ENCODE measurements at regions of chr9 and their contacts with region 1.

Region 1: DNA sequence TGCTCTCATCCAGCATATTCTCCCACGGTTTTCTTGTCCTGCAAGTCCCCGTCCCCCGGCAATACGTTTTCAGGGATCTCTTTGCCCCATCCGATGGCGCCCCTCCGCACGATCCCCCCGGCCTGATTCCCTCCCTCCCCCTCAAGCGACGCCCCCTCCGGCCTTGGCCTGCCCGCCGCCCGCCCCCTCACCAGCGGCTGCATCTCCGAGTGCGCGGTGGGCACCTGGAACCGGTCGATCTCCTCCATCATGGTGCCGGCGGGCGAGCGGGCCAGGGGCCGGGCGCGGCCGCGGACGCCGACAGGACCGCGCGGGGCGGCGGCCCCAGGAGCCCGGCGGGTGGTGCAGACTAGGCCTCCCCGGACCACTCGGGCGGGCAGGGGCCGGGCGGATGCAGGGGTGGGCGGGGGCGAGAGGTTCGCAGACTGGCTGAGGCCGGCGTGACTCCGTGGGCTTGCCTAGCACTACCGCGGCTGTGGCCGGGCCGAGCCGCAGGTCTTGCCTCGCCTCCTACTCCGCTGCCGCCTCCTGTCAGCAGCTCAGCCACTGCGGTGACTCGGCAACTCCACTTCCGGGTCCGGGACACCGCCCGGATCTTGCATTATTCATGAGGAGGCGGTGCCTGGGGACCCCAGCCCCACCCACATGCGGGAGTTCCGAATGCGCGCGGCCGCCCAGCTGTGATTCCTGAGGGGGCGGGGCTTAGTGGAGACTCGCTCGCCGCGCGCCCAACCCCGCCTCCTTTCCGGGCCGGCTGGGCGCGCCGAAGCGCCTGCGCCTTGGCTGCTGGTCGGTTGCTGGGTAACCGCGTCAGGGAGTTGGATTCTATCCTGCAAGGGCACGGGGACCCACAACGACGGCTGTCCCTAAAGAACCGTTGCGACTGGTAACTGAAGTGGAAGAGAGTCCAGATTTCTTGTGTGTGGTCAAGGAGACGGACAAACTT is at the starts of genes DNAI1 and FAM219A:
- DNase-seq: peak; percentile 96 to 99 (median 98)
- H3K4me3 ChIP-seq: peak within 1 kb of the TSS; percentile 47 to 79 (median 61)
- H3K4me3 Mint-ChIP-seq: peak within 1 kb of the TSS; percentile 92 to 97
- H3K27ac ChIP-seq: peak within 1 kb of the TSS in 1 of 2 donors; percentile 38
- H3K27ac Mint-ChIP-seq: peak within 1 kb of the TSS in 4 of 7 donors; percentile 71 to 86 (median 78)
- H3K4me1 ChIP-seq: peaks cover 28 to 29% of the 10 kb centered on the region in 2 donors
- H3K4me1 Mint-ChIP-seq: peaks cover 34% of the 10 kb centered on the region
- H3K27me3 ChIP-seq: peaks cover 2 to 15% of the 10 kb centered on the region in 2 donors
- H3K27me3 Mint-ChIP-seq: peaks cover 23 to 32% (median 27%) of the 10 kb centered on the region in 3 donors
- CTCF ChIP-seq: no peak
- polyA plus RNA-seq, gene DNAI1: not detected
- polyA plus RNA-seq, gene FAM219A: 0.61 to 15.3 (median 1.2) TPM

Region 2: GRCh38 chr9:34376596-34377403 is 81.5 kb before region 1 on chr9 and contains the start of gene MYORG:
- intact Hi-C with region 1: loop called (anchors 5 kb)
- DNase-seq: peak; percentile 59 to 71 (median 67)
- H3K4me3 ChIP-seq: peak within 1 kb of the TSS; percentile 56 to 90 (median 74)
- H3K4me3 Mint-ChIP-seq: peak within 1 kb of the TSS; percentile 89 to 94
- H3K27ac ChIP-seq: no peak within 1 kb of the TSS
- H3K27ac Mint-ChIP-seq: peak within 1 kb of the TSS in 6 of 7 donors; percentile 54 to 80 (median 71)
- H3K4me1 ChIP-seq: peaks cover 35 to 45% of the 10 kb centered on the region in 2 donors
- H3K4me1 Mint-ChIP-seq: peaks cover 39% of the 10 kb centered on the region
- H3K27me3 ChIP-seq: peaks cover 0 to 22% of the 10 kb centered on the region in 2 donors
- H3K27me3 Mint-ChIP-seq: peaks cover 27 to 46% (median 30%) of the 10 kb centered on the region in 3 donors
- CTCF ChIP-seq: no peak
- polyA plus RNA-seq, gene MYORG: 0.01 to 0.05 TPM in 2 of 3 donors, not detected in the other

Region 3: DNA sequence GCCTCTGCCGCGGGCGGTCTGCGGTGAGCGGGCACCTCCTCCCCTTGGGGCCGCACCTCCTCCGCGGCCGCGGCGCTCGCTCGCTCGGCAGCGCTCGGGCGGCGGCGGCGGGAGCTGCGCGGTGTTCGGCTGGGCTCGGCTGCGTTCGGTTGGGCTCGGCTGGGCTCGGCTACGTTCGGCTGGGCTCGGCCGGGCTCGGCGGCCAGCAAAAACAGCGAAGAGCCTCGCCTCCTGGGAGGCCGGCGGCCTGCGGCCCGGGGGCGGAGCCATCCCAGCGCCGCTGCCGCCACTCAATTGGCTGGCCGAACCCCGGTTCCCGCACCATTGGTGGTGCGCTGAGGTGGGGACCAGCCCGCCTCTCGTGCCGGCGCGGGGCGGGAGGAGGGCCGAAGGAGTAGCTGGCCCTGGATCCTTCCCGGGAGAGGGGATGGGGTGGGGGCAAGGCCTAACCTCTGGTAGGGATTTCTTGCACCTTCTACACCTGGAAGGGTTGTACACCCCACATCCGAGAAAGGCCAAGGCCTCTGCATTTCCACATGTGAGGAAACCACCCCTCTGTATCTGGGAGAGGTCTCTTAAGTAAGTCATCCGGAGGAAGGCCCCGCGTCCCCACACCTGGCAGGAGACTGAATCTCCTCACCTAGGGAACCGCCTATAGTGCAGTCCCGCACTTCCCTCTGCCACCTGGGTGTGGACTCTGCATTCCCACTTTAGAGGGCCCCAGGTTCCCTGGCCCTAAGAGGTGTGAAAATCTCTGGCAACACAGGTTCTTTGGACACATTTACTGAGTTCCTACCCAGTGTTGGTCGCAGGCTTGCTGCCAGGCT is 64.9 kb after region 1 on chr9 and contains the start of gene ENHO:
- intact Hi-C with region 1: loop called in 1 of 2 experiments (anchors 5 kb)
- DNase-seq: peak; percentile 82 to 87 (median 82)
- H3K4me3 ChIP-seq: peak within 1 kb of the TSS; percentile 30 to 74 (median 36)
- H3K4me3 Mint-ChIP-seq: peak within 1 kb of the TSS; percentile 72 to 89
- H3K27ac ChIP-seq: no peak within 1 kb of the TSS
- H3K27ac Mint-ChIP-seq: peak within 1 kb of the TSS in 2 of 7 donors; percentile 13 to 66
- H3K4me1 ChIP-seq: peaks cover 37 to 43% of the 10 kb centered on the region in 2 donors
- H3K4me1 Mint-ChIP-seq: peaks cover 29% of the 10 kb centered on the region
- H3K27me3 ChIP-seq: peaks cover 5 to 34% of the 10 kb centered on the region in 2 donors
- H3K27me3 Mint-ChIP-seq: peaks cover 26 to 36% (median 29%) of the 10 kb centered on the region in 3 donors
- CTCF ChIP-seq: no peak
- polyA plus RNA-seq, gene ENHO: 2.3 to 3.2 (median 2.7) TPM

Region 4: DNA sequence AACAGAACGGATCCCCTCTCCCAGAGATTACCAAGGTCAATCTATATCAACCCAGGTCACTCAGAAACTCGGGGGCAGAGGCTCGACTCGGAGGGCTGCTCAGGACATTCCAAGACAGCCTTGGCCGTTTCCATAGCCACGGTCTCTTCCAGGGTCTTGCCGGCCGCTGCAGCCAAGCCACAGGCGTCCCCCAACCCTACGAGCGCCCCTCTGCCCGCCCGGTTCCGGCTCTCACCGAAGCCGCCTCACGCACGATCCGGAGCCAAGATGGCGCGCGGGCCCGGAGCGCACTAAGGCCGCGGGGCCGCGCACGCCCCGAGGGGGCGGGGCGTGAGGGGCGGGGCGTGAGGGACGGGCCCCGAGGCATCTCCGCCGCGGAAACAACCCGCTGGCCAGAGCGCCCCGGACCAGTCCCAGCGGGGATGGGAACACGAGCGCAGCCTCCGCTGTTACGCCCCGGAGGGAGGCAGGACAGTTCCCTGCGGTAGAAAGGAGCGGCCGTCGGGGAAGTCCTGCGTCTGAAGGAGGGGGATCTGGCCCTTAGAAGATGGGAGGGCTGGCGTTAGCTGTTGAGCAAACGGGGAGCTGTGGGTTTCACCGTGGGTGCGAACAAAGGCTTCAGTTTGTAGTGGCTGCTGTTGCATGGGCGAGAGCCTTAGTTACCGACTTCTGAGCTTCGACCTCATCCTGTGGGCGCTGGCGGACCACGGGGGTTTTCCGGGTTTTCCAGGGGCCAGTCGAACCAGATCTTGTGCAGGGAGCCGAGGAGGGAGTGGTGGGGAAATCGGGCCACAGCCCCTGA is 153.7 kb after region 1 on chr9 and contains the start of gene RPP25L:
- intact Hi-C with region 1: loop called (anchors 5 to 10 kb)
- DNase-seq: peak; percentile 85 to 86 (median 86)
- H3K4me3 ChIP-seq: peak within 1 kb of the TSS; percentile 78 to 91 (median 85)
- H3K4me3 Mint-ChIP-seq: peak within 1 kb of the TSS; percentile 81 to 93
- H3K27ac ChIP-seq: peak within 1 kb of the TSS; percentile 76 to 97
- H3K27ac Mint-ChIP-seq: peak within 1 kb of the TSS; percentile 89 to 96 (median 94)
- H3K4me1 ChIP-seq: peaks cover 24 to 30% of the 10 kb centered on the region in 2 donors
- H3K4me1 Mint-ChIP-seq: peaks cover 27% of the 10 kb centered on the region
- H3K27me3 ChIP-seq: no peaks in the 10 kb centered on the region
- H3K27me3 Mint-ChIP-seq: peaks cover 0 to 4% (median 0%) of the 10 kb centered on the region in 3 donors
- CTCF ChIP-seq: no peak
- polyA plus RNA-seq, gene RPP25L: 20.1 to 42.3 (median 39.4) TPM